Activated T-helper 2 cell treated with anti-CD3 and anti-CD28 coated beads, Interferon-gamma antibody, Interleukin-2, Interleukin-4, amounts not matched to agents 10 μg/mL and 5 μg/mL and 100 μg/mL, durations not matched to agents 14 hours and 24 hours and 36 hours (primary cell): ENCODE measurements at regions of chrX and their contacts with region 1.

Region 1: DNA sequence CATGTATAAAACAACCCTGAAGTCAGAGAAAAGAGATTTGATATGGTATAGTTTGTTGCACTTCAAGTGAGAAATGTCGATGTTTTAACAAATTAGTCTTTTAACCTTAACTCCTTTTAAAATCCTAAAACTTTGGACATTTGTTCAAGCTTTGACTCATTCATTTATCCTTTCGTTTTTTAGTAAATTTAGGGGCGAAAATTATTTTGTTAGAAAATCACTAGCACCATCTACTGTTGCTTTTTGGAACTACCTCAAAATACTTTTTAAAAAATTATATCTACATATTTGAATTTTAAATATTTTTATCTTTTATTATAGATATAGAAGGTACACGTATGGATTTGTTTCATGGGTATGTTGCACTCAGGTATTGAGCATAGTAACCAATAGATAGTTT is 165.1 kb upstream of the POF1B start:
- DNase-seq: no peak
- H3K4me3 Mint-ChIP-seq: no peak overlapping the region
- H3K27ac Mint-ChIP-seq: no peak overlapping the region
- H3K4me1 Mint-ChIP-seq: no peaks in the 10 kb centered on the region
- H3K27me3 Mint-ChIP-seq: no peaks in the 10 kb centered on the region

Region 2: DNA sequence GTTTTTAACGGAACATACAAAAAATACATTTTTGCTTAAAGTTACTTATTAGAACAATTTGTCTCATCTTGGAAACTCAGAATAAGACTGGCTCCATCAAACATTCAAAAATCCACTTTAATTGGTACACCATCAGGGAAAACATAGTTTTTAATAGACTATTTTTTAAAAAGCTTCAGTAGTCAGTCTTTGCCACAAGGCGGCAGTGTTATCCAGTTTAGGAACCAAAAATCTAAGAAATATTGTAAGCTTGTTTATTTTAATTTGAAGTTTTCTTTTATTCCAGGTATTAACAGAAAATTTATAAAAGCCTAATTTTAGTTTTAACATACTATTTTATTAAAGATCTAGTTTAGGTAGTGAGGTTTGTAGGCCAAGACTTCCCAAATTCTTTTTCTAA is 433.3 kb before region 1 on chrX:
- intact Hi-C with region 1: loop called (anchors 1 kb)
- DNase-seq: no peak
- H3K4me3 Mint-ChIP-seq: no peak overlapping the region
- H3K27ac Mint-ChIP-seq: no peak overlapping the region
- H3K4me1 Mint-ChIP-seq: no peaks in the 10 kb centered on the region
- H3K27me3 Mint-ChIP-seq: no peaks in the 10 kb centered on the region

Region 3: DNA sequence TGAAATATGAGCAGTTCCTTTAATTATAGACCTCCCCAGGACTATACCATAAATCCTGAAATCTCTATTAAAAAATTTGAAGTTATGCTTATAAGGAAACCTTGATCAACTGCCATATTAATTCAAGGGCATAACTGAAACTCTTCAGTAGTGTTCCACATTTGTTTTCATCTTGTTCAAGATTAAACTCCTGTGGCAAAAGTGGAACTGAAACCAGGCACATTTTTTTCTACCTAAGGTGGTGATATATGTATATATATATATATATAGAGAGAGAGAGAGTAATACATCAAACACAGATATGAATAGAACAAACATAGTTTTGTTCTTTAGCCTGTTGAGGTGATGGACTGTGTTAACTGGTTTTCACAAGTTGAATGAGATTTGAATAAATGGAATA is 891.5 kb after region 1 on chrX:
- intact Hi-C with region 1: no loop called
- DNase-seq: no peak
- H3K4me3 Mint-ChIP-seq: no peak overlapping the region
- H3K27ac Mint-ChIP-seq: no peak overlapping the region
- H3K4me1 Mint-ChIP-seq: no peaks in the 10 kb centered on the region
- H3K27me3 Mint-ChIP-seq: no peaks in the 10 kb centered on the region